Calu3 (cell line): ENCODE measurements at regions of chr18 and their contacts with region 1.

Region 1: GRCh38 chr18:8367217-8367988 is 241.8 kb upstream of the RAB12 start:
- DNase-seq: peak; percentile 70
- H3K4me3 Mint-ChIP-seq: peak overlapping the region; percentile 77
- H3K27ac Mint-ChIP-seq: no peak overlapping the region
- H3K4me1 Mint-ChIP-seq: no peaks in the 10 kb centered on the region
- H3K27me3 Mint-ChIP-seq: no peaks in the 10 kb centered on the region
- CTCF ChIP-seq: peak; percentile 76

Region 2: GRCh38 chr18:8084160-8084559 is 283.2 kb before region 1 on chr18:
- CTCF ChIA-PET with region 1: no interaction called
- intact Hi-C with region 1: loop called (anchors 10 kb)
- DNase-seq: peak; percentile 22
- H3K4me3 Mint-ChIP-seq: no peak overlapping the region
- H3K27ac Mint-ChIP-seq: no peak overlapping the region
- H3K4me1 Mint-ChIP-seq: no peaks in the 10 kb centered on the region
- H3K27me3 Mint-ChIP-seq: no peaks in the 10 kb centered on the region
- CTCF ChIP-seq: no peak

Region 3: GRCh38 chr18:8162802-8163201 is 204.6 kb before region 1 on chr18:
- CTCF ChIA-PET with region 1: no interaction called
- intact Hi-C with region 1: no loop called
- DNase-seq: no peak
- H3K4me3 Mint-ChIP-seq: no peak overlapping the region
- H3K27ac Mint-ChIP-seq: no peak overlapping the region
- H3K4me1 Mint-ChIP-seq: no peaks in the 10 kb centered on the region
- H3K27me3 Mint-ChIP-seq: no peaks in the 10 kb centered on the region
- CTCF ChIP-seq: no peak

Region 4: GRCh38 chr18:8324343-8325065 is 42.9 kb before region 1 on chr18:
- CTCF ChIA-PET with region 1: no interaction called
- intact Hi-C with region 1: no loop called
- DNase-seq: no peak
- H3K4me3 Mint-ChIP-seq: no peak overlapping the region
- H3K27ac Mint-ChIP-seq: no peak overlapping the region
- H3K4me1 Mint-ChIP-seq: no peaks in the 10 kb centered on the region
- H3K27me3 Mint-ChIP-seq: no peaks in the 10 kb centered on the region
- CTCF ChIP-seq: no peak

Region 5: GRCh38 chr18:8381821-8382459 is 14.5 kb after region 1 on chr18:
- CTCF ChIA-PET with region 1: no interaction called
- intact Hi-C with region 1: no loop called
- DNase-seq: no peak
- H3K4me3 Mint-ChIP-seq: no peak overlapping the region
- H3K27ac Mint-ChIP-seq: no peak overlapping the region
- H3K4me1 Mint-ChIP-seq: no peaks in the 10 kb centered on the region
- H3K27me3 Mint-ChIP-seq: no peaks in the 10 kb centered on the region
- CTCF ChIP-seq: no peak

Region 6: GRCh38 chr18:9069601-9070000 is 702.2 kb after region 1 on chr18:
- CTCF ChIA-PET with region 1: no interaction called
- intact Hi-C with region 1: no loop called
- DNase-seq: no peak
- H3K4me3 Mint-ChIP-seq: no peak overlapping the region
- H3K27ac Mint-ChIP-seq: no peak overlapping the region
- H3K4me1 Mint-ChIP-seq: peaks cover 15% of the 10 kb centered on the region
- H3K27me3 Mint-ChIP-seq: no peaks in the 10 kb centered on the region
- CTCF ChIP-seq: no peak